Testis (tissue), 5 donors: ENCODE measurements at regions of chr10 and their contacts with region 1.

Region 1: DNA sequence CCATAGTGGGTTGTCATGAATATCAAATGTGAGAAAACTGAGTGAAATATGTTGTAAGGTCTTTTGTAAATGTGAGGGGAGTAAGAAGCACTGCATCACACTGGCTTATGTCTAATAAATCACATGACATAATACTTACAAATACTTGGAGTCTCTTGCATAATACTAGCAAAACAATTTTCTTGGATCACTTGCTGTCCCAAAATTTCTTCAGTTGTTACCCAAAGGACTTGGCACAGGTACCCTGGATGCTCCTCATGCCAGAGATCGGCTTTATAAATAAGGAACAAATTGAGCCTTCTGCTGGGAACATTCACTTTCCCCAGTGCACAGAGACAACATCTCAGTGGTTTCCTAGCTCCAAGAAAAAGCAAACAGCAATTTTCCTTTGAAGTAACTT is 5.0 kb upstream of the LRIT2 start:
- DNase-seq: no peak
- H3K4me3 ChIP-seq: no peak overlapping the region
- H3K27ac ChIP-seq: no peak overlapping the region
- H3K4me1 ChIP-seq: no peaks in the 10 kb centered on the region
- H3K27me3 ChIP-seq: no peaks in the 10 kb centered on the region
- CTCF ChIP-seq: no peak
- POLR2A ChIP-seq: no peak

Region 2: DNA sequence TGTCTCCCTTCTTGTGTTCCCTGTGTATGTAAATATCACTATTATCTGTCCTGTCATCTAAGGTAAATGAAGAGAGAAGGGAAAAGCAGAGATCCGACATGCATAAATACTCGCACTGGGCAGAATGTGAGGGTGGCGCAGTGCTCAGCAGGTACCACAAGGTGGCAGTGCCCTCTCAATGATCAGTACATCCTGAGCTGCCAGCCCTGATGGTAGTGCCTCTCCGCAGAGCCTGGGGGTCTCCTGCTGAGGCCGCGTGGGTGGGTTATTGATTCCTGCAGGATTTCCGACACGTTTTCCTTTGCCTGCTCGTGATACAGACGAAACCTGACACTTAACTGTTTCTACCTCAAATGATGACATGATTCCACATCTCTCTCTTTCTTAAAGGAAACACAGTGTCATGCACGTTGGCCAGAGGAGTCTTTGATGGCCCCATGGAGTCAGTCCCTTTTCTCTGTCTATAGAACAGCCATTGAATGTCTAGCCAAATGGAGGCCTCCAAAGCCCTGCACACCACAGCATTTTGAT is 34.3 kb after region 1 on chr10:
- intact Hi-C with region 1: loop called (anchors 5 kb)
- DNase-seq: peak; percentile 85
- H3K4me3 ChIP-seq: no peak overlapping the region
- H3K27ac ChIP-seq: no peak overlapping the region
- H3K4me1 ChIP-seq: no peaks in the 10 kb centered on the region
- H3K27me3 ChIP-seq: no peaks in the 10 kb centered on the region
- CTCF ChIP-seq: peak; percentile 72 to 90 (median 81)
- POLR2A ChIP-seq: no peak